ENCODE measurements at regions of chr3 and their contacts with region 1.

Region 1: DNA sequence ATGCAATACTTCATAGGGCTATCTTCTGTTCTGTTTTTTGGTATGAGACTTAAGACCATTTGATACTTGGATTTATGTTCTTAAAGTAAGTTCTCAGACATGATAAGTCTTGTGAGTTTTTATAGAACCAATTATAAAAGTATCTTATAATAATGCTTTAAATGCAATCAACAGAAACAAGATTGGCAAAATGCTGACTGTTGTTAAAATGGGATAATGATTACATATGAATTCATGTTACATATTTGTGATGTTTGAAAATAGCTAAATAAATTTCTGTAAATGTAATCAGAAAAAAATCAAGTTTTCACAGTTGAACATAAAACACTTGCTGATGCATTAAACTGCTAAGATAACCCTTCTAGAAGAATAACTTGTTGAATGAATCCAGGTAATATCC is 148.3 kb downstream of the PLCH1 start:
- DNase-seq: no peak
- ATAC-seq: no peak
- H3K4me3 ChIP-seq: no peak overlapping the region
- H3K27ac ChIP-seq: no peak overlapping the region
- H3K4me1 ChIP-seq: no peaks in the 10 kb centered on the region
- H3K27me3 ChIP-seq: no peaks in the 10 kb centered on the region
- CTCF ChIP-seq: no peak

Region 2: GRCh38 chr3:155581579-155581978 is 15.0 kb before region 1 on chr3:
- CTCF ChIA-PET with region 1: no interaction called
- POLR2A ChIA-PET with region 1: interaction called, 11 read pairs
- in situ Hi-C with region 1: no loop called
- intact Hi-C with region 1: no loop called
- DNase-seq: no peak
- ATAC-seq: no peak
- H3K4me3 ChIP-seq: no peak overlapping the region
- H3K27ac ChIP-seq: no peak overlapping the region
- H3K4me1 ChIP-seq: no peaks in the 10 kb centered on the region
- H3K27me3 ChIP-seq: no peaks in the 10 kb centered on the region; the same call in none of the 2 replicates
- CTCF ChIP-seq: no peak

Region 3: GRCh38 chr3:155676252-155676981 is 79.8 kb after region 1 on chr3:
- CTCF ChIA-PET with region 1: no interaction called
- POLR2A ChIA-PET with region 1: no interaction called
- in situ Hi-C with region 1: no loop called
- intact Hi-C with region 1: no loop called
- DNase-seq: no peak
- ATAC-seq: peak; percentile 73; the same call in 1 of the 2 replicates
- H3K4me3 ChIP-seq: peak overlapping the region in 1 of 2 experiments; percentile 16; a peak in 1 of 4 replicates
- H3K27ac ChIP-seq: no peak overlapping the region
- H3K4me1 ChIP-seq: no peaks in the 10 kb centered on the region
- H3K27me3 ChIP-seq: peaks cover 8% of the 10 kb centered on the region
- CTCF ChIP-seq: no peak